Right ventricle myocardium inferior (tissue), 1 donor: ENCODE measurements at regions of chr14 and their contacts with region 1.

Region 1: GRCh38 chr14:31510222-31510621 is 22.4 kb upstream of the GPR33 start:
- DNase-seq: no peak
- ATAC-seq: no peak

Region 2: DNA sequence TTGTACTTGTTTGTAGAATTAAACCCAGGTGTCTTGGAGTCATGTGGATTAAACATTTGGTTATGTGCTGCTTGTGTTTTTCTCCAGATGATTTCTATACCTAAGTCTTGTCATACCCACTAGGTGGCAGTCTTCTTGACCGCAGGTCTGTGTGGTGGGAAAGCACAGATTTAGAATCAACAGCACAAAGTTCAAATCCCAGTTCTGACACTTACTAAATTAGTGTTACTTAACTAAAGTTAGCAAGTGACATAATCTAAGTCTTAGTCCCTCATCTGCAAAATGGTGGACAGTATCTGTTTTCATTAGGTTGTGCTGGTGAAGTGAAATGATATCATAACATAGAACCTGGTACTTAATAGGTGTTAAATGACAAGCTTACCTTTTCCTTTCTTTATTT is 415.9 kb after region 1 on chr14:
- intact Hi-C with region 1: loop called (anchors 10 kb)
- DNase-seq: no peak
- ATAC-seq: no peak